A673 (cell line): ENCODE measurements at regions of chr21 and their contacts with region 1.

Region 1: GRCh38 chr21:25944672-25945213 is 210.0 kb downstream of the GABPA start:
- DNase-seq: no peak
- H3K4me3 ChIP-seq: no peak overlapping the region
- H3K27ac ChIP-seq: no peak overlapping the region
- H3K4me1 ChIP-seq: peaks cover 6% of the 10 kb centered on the region
- H3K27me3 ChIP-seq: no peaks in the 10 kb centered on the region
- CTCF ChIP-seq: no peak

Region 2: DNA sequence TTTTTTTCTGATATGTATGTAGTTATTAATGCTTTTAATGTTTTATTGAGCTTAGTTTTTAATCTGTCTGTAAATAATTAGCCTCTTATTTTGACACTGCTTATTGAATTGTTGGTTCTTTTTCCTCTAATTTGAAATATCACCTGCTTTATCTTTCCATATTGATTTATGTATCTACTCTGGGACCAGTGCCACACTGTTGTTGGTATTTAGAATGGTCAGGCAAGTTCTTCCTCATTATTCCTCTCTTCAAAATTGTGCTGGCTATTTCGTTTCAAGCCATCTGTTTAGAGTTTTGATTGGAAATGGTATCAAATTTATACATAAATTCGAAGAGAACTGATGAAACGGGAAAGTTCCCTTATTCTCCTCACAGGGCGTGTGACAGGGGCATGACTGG is 322.6 kb after region 1 on chr21:
- CTCF ChIA-PET with region 1: no interaction called
- POLR2A ChIA-PET with region 1: interaction called, 13 read pairs
- intact Hi-C with region 1: no loop called
- DNase-seq: no peak
- H3K4me3 ChIP-seq: no peak overlapping the region
- H3K27ac ChIP-seq: no peak overlapping the region
- H3K4me1 ChIP-seq: no peaks in the 10 kb centered on the region
- H3K27me3 ChIP-seq: no peaks in the 10 kb centered on the region
- CTCF ChIP-seq: no peak